ENCODE measurements at regions of chr1 and their contacts with region 1.

Region 1: DNA sequence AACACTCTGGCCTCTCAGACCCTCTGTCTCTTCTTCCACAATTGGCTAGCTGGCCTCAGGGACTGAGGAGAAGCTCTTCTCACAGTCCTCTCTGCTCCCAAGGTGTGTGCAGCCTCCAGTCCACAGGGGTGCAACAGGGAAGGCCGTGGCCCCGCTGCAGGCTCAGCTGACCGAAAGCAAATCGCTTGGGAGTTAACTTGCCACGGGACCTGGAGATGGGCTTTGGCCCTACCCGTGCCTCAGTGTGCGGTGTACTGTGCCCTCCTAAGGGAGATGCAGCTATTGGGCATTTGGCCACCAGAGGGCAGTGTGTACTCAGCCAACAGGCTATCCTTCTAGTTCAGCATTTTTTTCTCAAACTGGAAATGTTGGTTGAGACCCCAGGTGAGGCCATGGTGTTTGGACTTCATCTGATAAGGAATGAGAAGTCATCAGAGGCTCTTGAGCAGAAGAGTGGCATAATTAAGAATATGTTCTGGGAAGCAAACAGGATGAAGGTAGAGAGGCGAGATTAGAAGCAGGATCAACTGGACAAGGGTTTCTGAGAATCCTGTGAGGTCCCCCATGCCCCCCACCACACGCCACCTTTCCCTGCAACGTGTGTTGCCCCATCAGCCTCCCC is 42.5 kb upstream of the TMEM125 start:
- DNase-seq: peak; percentile 86
- ATAC-seq: peak; percentile 90 to 93
- H3K4me3 ChIP-seq: no peak overlapping the region
- H3K27ac ChIP-seq: no peak overlapping the region
- H3K4me1 ChIP-seq: peaks cover 25% of the 10 kb centered on the region
- H3K27me3 ChIP-seq: no peaks in the 10 kb centered on the region
- CTCF ChIP-seq: peak; percentile 95

Region 2: DNA sequence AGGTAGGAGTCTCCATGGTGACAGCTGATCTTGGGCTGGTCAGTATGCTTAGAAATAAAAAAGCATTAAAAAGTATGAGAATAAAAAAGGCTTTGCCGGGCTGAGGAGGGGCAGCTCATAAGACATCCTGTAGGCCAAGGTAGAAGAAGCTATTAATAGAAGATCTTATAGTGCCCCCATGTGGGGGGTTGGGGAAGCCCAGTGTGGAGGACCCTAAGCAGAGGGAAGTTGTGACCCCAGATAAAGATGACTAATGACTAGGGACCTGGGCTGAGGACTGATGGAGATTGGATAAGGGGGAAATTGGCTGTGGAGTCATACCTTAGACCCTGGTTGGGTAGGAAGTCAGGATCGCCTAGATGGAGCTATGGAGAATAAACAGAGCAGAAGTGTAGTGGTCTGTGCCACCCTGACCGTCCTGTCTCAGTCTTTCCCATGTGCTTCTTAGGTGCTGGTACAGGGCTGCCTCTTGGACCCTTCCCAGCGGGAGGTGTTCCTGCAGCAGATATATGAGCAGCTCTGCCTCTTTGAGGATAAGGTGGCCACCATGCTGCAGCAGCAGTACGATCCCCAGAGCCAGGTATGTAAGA is 187.5 kb after region 1 on chr1:
- intact Hi-C with region 1: loop called (anchors 10 kb)
- DNase-seq: no peak
- ATAC-seq: peak; percentile 86 to 92
- H3K4me3 ChIP-seq: no peak overlapping the region
- H3K27ac ChIP-seq: no peak overlapping the region
- H3K4me1 ChIP-seq: peaks cover 4% of the 10 kb centered on the region
- H3K27me3 ChIP-seq: no peaks in the 10 kb centered on the region
- CTCF ChIP-seq: peak; percentile 74

Region 3: DNA sequence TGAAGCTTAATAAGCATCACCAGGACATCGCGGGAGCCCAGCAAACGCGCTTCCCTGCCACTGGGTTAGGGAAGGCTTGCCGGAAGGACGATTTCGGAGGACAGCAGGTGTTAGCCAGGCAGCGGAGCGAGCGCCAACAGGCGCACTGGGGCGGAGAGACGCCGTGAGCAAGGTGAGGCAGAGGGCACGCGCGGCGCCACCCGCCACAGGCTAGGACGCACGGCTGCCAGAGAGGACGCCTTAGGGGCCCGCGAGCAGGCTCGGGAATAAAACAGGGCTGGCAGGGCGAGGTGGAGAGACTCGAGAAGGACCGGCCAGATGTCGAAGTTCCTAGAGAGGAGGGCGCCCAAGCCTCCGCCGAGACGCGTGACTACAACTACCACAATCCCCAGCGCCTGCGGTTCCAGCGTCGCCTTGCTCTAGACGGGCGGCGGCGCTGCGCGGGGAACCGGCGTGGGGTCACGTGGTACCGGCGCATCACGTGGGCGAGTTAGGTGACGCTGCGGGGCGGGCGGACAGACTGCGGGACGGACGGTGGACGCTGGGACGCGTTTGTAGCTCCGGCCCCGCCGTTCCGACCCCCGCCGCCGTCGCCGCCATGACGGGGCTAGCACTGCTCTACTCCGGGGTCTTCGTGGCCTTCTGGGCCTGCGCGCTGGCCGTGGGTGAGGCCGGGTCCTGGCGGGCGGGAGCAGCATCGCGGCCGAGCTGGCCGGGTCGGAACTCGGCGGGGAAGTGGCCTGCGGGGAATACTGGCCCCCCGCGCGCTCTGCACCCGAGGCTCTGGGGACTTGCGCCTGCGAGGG is 747.4 kb after region 1 on chr1 and contains the start of gene ATP6V0B:
- intact Hi-C with region 1: no loop called
- DNase-seq: peak; percentile 99
- ATAC-seq: peak; percentile 93 to 94
- H3K4me3 ChIP-seq: peak within 1 kb of the TSS; percentile 81
- H3K27ac ChIP-seq: peak within 1 kb of the TSS; percentile 97
- H3K4me1 ChIP-seq: peaks cover 59% of the 10 kb centered on the region
- H3K27me3 ChIP-seq: no peaks in the 10 kb centered on the region
- CTCF ChIP-seq: peak; percentile 54
- total RNA-seq, gene ATP6V0B: 205 TPM